SK-N-SH (cell line): ENCODE measurements at regions of chr2 and their contacts with region 1.

Region 1: DNA sequence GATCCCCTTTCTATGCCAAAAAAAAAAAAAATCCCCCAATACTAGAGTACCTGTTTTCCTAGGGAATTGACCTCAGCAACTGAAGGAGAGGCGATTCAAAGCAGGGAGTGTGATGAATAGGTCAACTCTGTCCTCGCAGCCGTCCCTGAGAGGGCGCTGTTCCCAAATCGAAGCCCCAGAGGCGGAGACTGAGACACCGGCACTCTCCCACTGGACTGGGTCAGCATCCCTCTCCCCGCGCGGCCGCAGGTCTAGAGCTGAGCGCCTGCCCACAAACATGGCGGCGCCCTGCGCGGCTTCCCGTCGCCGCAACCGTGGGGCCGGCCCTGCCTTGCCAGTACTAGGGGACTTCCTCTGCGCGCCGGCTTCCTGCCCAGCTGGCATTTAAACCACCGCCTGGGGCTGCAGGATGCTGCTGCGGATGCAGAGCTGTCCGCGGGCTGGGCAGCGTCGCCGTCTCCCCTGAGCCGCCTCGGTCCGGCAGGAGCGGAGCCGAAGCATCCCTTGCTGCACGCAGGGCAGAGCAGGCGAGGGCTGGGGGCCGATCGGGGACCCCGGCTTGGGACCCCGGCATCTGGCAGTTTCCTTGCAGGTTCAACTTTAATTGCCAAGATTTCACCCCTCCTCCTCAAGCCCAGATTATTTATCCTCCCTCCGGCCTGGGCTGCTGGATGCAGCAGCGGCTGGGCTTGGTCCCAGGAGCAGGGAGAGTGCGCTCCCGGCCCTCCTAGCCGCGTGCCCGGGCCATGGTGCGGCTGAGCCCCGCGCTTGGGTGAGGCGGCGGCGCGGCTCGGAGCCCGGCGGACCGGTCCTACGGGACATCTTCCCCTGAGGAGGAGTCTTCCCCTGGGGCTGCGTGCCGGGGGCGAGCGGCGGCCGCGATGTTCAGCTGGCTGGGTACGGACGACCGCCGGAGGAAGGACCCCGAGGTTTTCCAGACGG is at the start of gene EHD3:
- DNase-seq: peak; percentile 98
- H3K4me3 ChIP-seq: peak within 1 kb of the TSS; percentile 74 to 89
- H3K27ac ChIP-seq: peak within 1 kb of the TSS; percentile 19 to 92; a peak in 3 of 4 replicates
- H3K4me1 ChIP-seq: peaks cover 15 to 42% of the 10 kb centered on the region in 2 experiments; a peak in 3 of 4 replicates
- H3K27me3 ChIP-seq: no peaks in the 10 kb centered on the region
- CTCF ChIP-seq: peak; percentile 85
- EP300 ChIP-seq: peak in 1 of 2 experiments; percentile 24; a peak in 2 of 4 replicates
- RAD21 ChIP-seq: peak; percentile 80
- polyA plus RNA-seq, gene EHD3: 45.3 and 45.4 TPM in 2 replicates

Region 2: DNA sequence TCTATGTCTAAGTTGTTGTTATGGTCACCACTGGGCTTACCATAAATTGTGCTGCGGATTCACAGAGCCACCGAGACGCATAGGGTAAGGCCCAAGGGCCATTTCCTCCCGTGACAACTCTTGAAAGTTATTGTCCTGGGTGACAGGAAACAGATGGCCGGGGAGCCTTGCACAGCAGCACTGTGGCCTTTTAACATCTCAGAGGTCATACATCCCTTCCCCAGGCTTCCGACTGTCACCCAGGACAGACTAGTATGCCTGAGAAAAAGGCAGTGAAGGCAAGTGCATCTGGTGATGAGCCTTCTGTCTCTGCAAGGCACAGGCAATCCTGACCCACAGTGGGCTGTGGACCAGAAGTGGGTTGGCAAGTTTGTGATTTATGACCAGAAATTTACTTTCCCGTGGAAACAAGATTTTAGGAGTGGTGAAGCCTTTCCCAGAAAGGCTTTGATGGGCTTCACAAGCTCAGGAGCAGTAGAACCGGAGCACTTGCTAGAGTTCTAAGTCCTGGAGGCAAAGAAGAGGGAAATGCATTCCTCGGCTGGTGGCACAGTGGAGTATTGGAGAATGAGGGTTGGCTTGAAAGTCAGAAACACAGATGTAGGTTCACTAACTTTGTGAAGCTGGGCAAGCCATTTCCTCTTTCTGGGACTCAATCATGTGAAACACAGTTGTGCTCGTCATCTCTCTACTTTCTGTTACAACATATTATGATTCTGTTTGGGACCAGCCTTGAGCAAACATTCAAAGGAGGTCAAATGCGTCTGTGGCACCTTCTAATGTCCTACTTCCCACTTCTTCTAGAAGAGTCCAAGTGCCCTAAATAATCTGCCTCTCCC is 14.7 kb before region 1 on chr2:
- CTCF ChIA-PET with region 1: interaction called, 15 read pairs
- POLR2A ChIA-PET with region 1: no interaction called
- DNase-seq: peak; percentile 32
- H3K4me3 ChIP-seq: no peak overlapping the region
- H3K27ac ChIP-seq: no peak overlapping the region
- H3K4me1 ChIP-seq: peaks cover 0 to 8% of the 10 kb centered on the region in 2 experiments; a peak in 1 of 4 replicates
- H3K27me3 ChIP-seq: peaks cover 28% of the 10 kb centered on the region
- CTCF ChIP-seq: no peak
- EP300 ChIP-seq: no peak
- RAD21 ChIP-seq: no peak

Region 3: DNA sequence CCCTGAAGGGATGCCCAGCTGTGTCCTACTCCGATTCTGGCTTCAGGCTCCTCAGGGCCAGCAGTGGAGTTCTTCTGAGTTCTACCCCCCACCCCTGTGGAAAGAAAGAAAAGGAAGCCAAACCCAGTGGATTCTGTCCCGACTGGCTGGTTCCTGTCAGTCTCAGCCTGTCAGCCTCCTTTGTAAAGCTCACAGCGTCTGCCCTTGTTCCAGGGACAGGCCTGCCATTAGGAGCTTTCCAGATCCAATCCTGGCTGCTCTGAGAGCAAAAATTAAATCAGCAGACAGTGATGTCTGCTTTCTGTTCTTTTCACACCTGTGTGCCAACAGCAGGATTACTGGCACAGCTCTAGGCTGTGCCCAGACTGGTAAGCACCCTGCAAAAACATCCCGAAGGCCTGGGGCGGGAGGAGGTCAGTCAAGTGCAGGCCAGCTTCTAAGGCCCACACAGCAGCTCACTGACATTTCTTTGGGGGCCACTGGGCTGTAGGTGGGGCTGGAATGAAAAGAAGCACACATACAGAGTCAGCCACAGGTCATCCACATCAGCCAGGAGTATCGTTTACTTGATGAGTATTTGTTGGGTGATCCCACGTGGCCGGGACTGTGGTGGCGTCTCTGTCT is 69.0 kb after region 1 on chr2:
- CTCF ChIA-PET with region 1: interaction called, 31 read pairs
- POLR2A ChIA-PET with region 1: interaction called, 5 read pairs
- DNase-seq: peak; percentile 71
- H3K4me3 ChIP-seq: no peak overlapping the region
- H3K27ac ChIP-seq: peak overlapping the region in 1 of 2 experiments; percentile 97; a peak in 2 of 4 replicates
- H3K4me1 ChIP-seq: peaks cover 2 to 33% of the 10 kb centered on the region in 2 experiments; a peak in 3 of 4 replicates
- H3K27me3 ChIP-seq: no peaks in the 10 kb centered on the region
- CTCF ChIP-seq: no peak
- EP300 ChIP-seq: peak in 1 of 2 experiments; percentile 90; a peak in 2 of 4 replicates
- RAD21 ChIP-seq: peak; percentile 30; the same call in 1 of the 2 replicates